Endothelial cell of umbilical vein (primary cell): ENCODE measurements at regions of chr20 and their contacts with region 1.

Region 1: DNA sequence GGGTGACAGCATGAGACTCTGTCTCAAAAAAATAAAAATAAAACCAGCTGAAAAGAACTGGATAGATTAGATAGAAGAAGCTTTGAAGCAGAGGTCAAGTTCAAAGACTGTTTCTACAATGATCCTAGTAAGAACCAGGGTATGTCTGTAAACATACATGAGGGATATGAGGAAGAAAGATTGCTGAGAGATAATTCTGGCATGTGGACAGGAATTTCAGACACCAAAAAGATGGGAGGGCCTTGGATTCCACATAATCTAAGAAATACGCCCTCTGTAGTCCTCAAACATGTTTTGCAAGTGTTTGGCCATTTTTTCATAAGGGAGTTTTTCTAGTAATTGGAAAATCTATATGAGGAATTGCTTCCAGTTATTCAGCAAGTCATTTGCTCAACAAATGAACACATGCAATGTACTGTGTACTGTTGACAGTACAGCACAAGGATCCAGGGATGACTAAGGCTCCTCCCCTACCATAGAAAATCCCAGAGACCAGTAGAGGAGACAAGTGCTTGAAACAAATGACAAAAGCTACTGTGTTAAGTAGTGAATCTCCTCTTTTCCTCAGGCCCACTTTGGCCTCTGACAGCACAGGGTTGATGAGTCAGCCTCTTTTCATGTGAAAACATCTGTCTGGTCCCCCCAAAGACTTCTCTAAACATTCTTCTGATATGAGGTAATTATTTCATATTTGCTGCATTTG is 795.9 kb downstream of the MAFB start:
- DNase-seq: no peak
- H3K4me3 ChIP-seq: no peak overlapping the region
- H3K27ac ChIP-seq: no peak overlapping the region
- H3K4me1 ChIP-seq: no peaks in the 10 kb centered on the region
- H3K27me3 ChIP-seq: no peaks in the 10 kb centered on the region
- CTCF ChIP-seq: no peak
- POLR2A ChIP-seq: no peak

Region 2: GRCh38 chr20:39935901-39936300 is 42.8 kb after region 1 on chr20:
- CTCF ChIA-PET with region 1: no interaction called
- POLR2A ChIA-PET with region 1: no interaction called
- dilution Hi-C with region 1: no loop called
- intact Hi-C with region 1: loop called (anchors 1 kb)
- DNase-seq: no peak
- H3K4me3 ChIP-seq: no peak overlapping the region
- H3K27ac ChIP-seq: no peak overlapping the region
- H3K4me1 ChIP-seq: no peaks in the 10 kb centered on the region
- H3K27me3 ChIP-seq: no peaks in the 10 kb centered on the region
- CTCF ChIP-seq: no peak
- POLR2A ChIP-seq: no peak